Right cardiac atrium (tissue), 5 donors: ENCODE measurements at regions of chr14 and their contacts with region 1.

Region 1: GRCh38 chr14:96741151-96741977 is 55.8 kb upstream of the VRK1 start:
- DNase-seq: peak; percentile 54 to 83 (median 82)
- ATAC-seq: peak; percentile 79 to 83
- H3K4me3 ChIP-seq: peak overlapping the region; percentile 2
- H3K27ac ChIP-seq: no peak overlapping the region
- H3K4me1 ChIP-seq: no peaks in the 10 kb centered on the region
- H3K27me3 ChIP-seq: no peaks in the 10 kb centered on the region

Region 2: DNA sequence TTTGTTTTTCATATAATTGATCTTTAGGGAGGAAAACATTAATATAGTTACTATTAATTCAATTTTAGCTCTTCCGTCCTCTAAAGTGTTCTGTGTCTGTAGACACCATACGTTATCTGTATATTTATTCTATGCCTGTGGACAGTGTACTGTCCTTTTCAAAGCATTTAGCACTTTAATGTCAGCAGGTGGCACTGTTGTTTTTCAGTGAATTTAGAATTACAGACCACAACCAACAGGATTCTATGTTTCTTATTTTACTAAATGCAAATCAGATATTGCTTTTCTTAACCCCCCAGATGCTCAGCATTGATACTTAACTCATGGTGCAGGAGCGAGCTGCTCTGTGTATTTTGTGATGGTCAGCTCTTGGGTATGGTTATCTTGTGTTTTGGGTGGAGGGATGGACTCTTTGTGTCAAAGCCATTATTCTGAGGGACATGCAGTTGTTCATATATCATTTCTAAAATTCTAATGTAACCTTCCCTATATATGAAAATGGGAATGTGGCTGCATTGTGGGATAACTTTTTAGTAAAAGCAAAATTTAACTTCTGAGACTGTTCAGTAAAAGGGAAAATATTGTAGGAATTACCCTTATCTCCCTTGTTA is 174.0 kb before region 1 on chr14:
- intact Hi-C with region 1: loop called in 2 of 4 experiments (anchors 2 to 10 kb)
- DNase-seq: no peak
- ATAC-seq: peak in 1 of 2 donors; percentile 56
- H3K4me3 ChIP-seq: no peak overlapping the region
- H3K27ac ChIP-seq: no peak overlapping the region
- H3K4me1 ChIP-seq: no peaks in the 10 kb centered on the region
- H3K27me3 ChIP-seq: no peaks in the 10 kb centered on the region

Region 3: GRCh38 chr14:96584199-96584906 is 157.0 kb before region 1 on chr14:
- intact Hi-C with region 1: loop called in 2 of 4 experiments (anchors 10 kb)
- DNase-seq: no peak
- ATAC-seq: peak; percentile 38 to 42
- H3K4me3 ChIP-seq: no peak overlapping the region
- H3K27ac ChIP-seq: no peak overlapping the region
- H3K4me1 ChIP-seq: no peaks in the 10 kb centered on the region
- H3K27me3 ChIP-seq: no peaks in the 10 kb centered on the region

Region 4: GRCh38 chr14:96592591-96593386 is 148.6 kb before region 1 on chr14:
- intact Hi-C with region 1: loop called in 2 of 4 experiments (anchors 5 to 10 kb)
- DNase-seq: peak; percentile 49 to 84 (median 81)
- ATAC-seq: peak; percentile 83 to 86
- H3K4me3 ChIP-seq: peak overlapping the region; percentile 39
- H3K27ac ChIP-seq: no peak overlapping the region
- H3K4me1 ChIP-seq: no peaks in the 10 kb centered on the region
- H3K27me3 ChIP-seq: no peaks in the 10 kb centered on the region

Region 5: DNA sequence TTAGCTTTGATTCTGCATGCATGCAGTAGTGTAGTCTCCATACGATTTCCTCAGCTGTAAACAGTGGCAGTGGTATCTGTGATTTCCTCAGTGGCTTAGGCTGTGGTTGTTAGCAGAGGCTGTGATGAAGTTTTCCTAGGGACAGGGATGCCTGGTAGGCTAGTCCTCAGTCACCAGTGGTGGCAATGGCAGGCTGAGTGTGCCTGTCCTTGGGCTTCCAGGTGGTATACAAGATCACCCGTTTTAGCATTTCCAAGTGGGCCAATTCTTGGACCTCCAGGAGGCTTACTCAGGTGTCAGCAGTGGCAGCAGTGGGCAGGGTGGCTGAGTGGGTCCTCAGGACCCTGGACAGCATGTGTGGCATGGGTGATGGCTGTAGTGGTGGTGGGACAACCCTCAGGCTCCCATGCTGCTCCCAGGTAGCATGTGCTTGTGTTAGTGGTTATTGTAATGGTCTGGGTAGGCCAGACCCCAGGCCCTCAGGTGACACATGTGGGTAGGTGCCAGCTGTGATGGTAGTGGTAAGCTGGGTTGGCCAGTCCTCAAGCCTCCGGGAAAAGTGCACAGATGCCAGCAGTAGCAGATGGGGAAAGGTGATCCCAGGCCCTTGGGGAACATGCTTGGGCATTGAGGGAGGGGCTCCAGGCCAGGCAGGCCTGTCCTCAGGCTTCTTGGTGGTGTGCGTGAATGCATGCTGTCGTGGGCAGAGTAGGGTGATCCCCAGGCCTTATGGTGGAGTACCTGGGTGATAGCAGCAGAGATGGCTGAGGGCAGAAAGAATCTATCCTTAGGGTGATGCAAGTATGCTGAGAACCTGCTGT is 92.6 kb before region 1 on chr14:
- intact Hi-C with region 1: no loop called
- DNase-seq: no peak
- ATAC-seq: peak in 1 of 2 donors; percentile 26
- H3K4me3 ChIP-seq: no peak overlapping the region
- H3K27ac ChIP-seq: no peak overlapping the region
- H3K4me1 ChIP-seq: no peaks in the 10 kb centered on the region
- H3K27me3 ChIP-seq: no peaks in the 10 kb centered on the region